H1 (cell line): ENCODE measurements at regions of chr1 and their contacts with region 1.

Region 1: DNA sequence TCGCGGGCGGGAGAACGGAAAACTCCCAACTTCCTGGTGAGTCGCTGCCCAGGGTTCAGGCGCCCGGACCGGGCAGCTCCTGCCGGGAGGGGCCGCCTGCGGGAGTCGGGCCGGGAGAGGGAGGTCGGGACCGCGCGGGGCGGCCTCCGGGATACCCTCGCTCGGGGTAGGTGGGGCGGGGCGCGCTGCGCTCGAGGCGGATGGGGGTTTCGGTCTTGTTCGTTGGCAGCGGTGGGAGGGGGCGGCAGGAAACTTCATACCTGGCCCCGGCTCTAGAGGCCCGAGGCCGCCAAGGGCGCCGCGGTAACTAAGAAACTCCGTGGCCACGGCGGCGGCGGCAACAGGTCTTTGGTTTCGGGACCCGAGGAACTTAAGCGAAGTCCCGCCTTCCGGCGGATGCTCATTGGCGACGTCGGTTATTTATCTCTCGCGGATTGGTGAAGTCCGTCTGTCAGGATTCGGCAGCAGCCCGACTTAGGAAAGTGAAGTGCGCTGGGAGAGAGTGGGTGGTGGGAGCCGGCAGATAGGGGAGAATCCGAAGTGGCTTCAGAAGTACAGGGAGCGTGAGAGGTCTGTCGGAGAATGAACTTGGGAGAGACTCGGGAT is 546 bp downstream of the NEK7 start:
- DNase-seq: peak; percentile 73 to 85
- H3K4me3 ChIP-seq: peak overlapping the region; percentile 58 to 92 (median 75)
- H3K27ac ChIP-seq: peak overlapping the region; percentile 64
- H3K4me1 ChIP-seq: peaks cover 0 to 16% (median 6%) of the 10 kb centered on the region in 4 experiments; a peak in 6 of 7 replicates
- H3K27me3 ChIP-seq: no peaks in the 10 kb centered on the region
- CTCF ChIP-seq: no peak
- EP300 ChIP-seq: no peak
- POLR2A ChIP-seq: peak in 1 of 2 experiments; percentile 50; a peak in 1 of 3 replicates
- RAD21 ChIP-seq: no peak

Region 2: GRCh38 chr1:198167436-198167934 is 10.1 kb after region 1 on chr1:
- CTCF ChIA-PET with region 1: interaction called, 18 read pairs
- POLR2A ChIA-PET with region 1: interaction called, 3 read pairs
- DNase-seq: no peak
- H3K4me3 ChIP-seq: no peak overlapping the region
- H3K27ac ChIP-seq: no peak overlapping the region
- H3K4me1 ChIP-seq: peaks cover 0 to 4% (median 1%) of the 10 kb centered on the region in 4 experiments; a peak in 5 of 7 replicates
- H3K27me3 ChIP-seq: no peaks in the 10 kb centered on the region
- CTCF ChIP-seq: no peak
- EP300 ChIP-seq: no peak
- POLR2A ChIP-seq: no peak
- RAD21 ChIP-seq: no peak

Region 3: DNA sequence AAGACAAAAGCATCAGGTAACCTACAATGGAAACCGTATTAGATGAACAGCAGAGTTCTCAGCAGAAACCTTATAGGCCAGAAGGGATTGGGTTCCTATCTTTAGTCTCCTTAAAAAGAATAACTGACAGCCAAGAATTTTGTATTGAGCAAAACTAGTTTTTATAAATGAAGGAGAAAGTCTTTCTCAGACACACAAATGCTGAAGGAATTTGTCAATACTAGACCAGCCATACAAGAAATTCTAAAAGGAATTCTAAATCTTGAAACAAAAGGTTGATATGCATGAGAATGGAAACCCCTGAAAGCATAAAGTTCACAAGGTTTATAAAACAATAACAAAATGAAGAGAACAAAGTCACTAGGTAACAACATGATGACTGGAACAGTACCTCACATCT is 57.6 kb after region 1 on chr1:
- CTCF ChIA-PET with region 1: no interaction called
- POLR2A ChIA-PET with region 1: no interaction called
- DNase-seq: no peak
- H3K4me3 ChIP-seq: no peak overlapping the region
- H3K27ac ChIP-seq: no peak overlapping the region
- H3K4me1 ChIP-seq: peaks cover 0 to 2% (median 0%) of the 10 kb centered on the region in 4 experiments; a peak in 1 of 7 replicates
- H3K27me3 ChIP-seq: no peaks in the 10 kb centered on the region
- CTCF ChIP-seq: no peak
- EP300 ChIP-seq: no peak
- POLR2A ChIP-seq: no peak
- RAD21 ChIP-seq: no peak